Sigmoid colon (tissue), 7 donors: ENCODE measurements at regions of chr21 and their contacts with region 1.

Region 1: DNA sequence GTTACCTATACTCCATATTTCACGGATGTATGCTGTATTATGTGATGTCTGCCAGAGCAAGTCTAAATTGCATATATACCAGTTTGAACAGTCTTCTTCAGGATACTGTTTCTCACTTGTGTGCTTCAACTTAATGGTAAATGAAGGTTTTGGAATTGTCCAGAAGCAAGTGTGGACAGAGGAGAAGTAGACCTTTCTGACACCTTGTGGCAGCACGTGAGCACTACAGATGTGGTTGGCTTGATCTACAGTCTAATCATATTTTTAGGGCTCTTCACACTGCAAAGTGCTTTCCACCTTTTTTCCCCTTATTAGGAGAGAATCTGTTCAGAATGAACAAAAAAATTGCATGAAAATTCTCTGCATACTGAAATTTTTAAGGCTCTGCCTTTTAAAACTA is 10.9 kb downstream of the MORC3 start:
- DNase-seq: no peak
- H3K4me3 ChIP-seq: no peak overlapping the region
- H3K27ac ChIP-seq: no peak overlapping the region
- H3K4me1 ChIP-seq: peaks cover 0 to 54% (median 45%) of the 10 kb centered on the region in 4 donors
- H3K27me3 ChIP-seq: no peaks in the 10 kb centered on the region
- CTCF ChIP-seq: peak; percentile 26 to 64 (median 62)
- EP300 ChIP-seq: no peak
- POLR2A ChIP-seq: no peak

Region 2: GRCh38 chr21:35674895-35675470 is 655.9 kb before region 1 on chr21:
- intact Hi-C with region 1: no loop called
- DNase-seq: no peak
- H3K4me3 ChIP-seq: no peak overlapping the region
- H3K27ac ChIP-seq: no peak overlapping the region
- H3K4me1 ChIP-seq: no peaks in the 10 kb centered on the region
- H3K27me3 ChIP-seq: peaks cover 0 to 5% (median 2%) of the 10 kb centered on the region in 3 donors
- CTCF ChIP-seq: no peak
- EP300 ChIP-seq: no peak
- POLR2A ChIP-seq: no peak

Region 3: DNA sequence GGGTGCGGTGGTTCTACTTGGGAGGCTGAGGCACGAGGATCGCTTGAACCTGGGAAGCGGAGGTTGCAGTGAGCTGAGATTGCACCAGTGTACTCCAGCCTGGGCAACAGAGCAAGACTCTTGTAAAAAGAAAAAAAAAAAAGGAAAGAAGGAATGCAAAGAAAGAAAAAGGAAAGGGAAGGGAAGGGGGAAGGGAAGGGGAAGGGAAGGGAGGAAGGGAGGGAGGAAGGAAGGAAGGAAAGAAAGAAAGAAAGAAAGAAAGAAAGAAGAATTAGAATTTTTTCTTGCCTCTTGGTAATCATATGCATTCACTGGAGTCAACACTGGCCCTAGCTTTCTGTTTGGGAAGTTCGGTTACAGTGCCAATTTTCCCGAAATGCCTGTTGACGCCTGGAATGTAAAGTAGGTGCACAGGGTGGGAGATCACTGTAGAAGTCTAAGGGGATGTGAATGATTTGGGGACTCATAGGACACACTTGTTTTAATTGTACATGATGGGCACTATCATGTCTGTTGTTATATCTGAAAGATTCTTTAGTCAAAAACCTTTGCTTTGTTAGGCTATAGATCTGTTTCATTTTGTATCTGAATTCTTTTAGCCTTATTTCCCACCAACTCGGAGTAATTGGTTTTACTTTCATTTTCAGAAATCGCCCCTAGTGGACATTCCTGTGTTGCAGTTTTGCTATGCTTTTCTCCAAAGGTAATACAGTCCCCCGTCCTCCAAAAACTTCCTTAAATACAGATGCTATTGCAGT is 70.7 kb before region 1 on chr21:
- intact Hi-C with region 1: loop called (anchors 5 kb)
- DNase-seq: no peak
- H3K4me3 ChIP-seq: peak overlapping the region; percentile 36 to 54 (median 46)
- H3K27ac ChIP-seq: peak overlapping the region; percentile 69 to 83 (median 79)
- H3K4me1 ChIP-seq: peaks cover 0 to 8% (median 5%) of the 10 kb centered on the region in 4 donors
- H3K27me3 ChIP-seq: no peaks in the 10 kb centered on the region
- CTCF ChIP-seq: peak; percentile 51 to 77 (median 72)
- EP300 ChIP-seq: no peak
- POLR2A ChIP-seq: no peak

Region 4: DNA sequence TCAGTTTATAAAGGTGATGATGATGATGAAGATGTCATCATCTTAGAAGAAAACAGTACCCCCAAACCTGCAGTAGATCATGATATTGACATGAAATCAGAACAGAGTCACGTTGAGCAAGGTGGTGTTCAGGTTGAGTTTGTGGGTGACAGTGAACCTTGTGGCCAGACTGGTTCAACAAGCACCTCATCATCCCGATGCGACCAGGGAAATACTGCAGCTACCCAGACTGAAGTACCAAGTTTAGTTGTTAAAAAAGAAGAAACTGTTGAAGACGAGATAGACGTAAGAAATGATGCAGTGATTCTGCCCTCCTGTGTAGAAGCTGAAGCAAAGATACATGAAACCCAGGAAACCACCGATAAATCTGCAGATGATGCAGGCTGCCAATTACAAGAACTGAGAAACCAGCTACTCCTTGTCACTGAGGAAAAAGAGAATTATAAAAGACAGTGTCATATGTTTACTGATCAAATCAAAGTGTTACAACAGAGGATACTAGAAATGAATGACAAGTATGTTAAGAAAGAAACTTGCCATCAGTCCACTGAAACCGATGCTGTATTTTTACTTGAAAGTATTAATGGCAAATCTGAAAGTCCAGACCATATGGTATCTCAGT is 38.3 kb after region 1 on chr21:
- intact Hi-C with region 1: no loop called
- DNase-seq: no peak
- H3K4me3 ChIP-seq: no peak overlapping the region
- H3K27ac ChIP-seq: no peak overlapping the region
- H3K4me1 ChIP-seq: no peaks in the 10 kb centered on the region
- H3K27me3 ChIP-seq: no peaks in the 10 kb centered on the region
- CTCF ChIP-seq: no peak
- EP300 ChIP-seq: no peak
- POLR2A ChIP-seq: no peak

Region 5: GRCh38 chr21:36446301-36446700 is 115.4 kb after region 1 on chr21:
- intact Hi-C with region 1: no loop called
- DNase-seq: no peak
- H3K4me3 ChIP-seq: no peak overlapping the region
- H3K27ac ChIP-seq: no peak overlapping the region
- H3K4me1 ChIP-seq: no peaks in the 10 kb centered on the region
- H3K27me3 ChIP-seq: no peaks in the 10 kb centered on the region
- CTCF ChIP-seq: no peak
- EP300 ChIP-seq: no peak
- POLR2A ChIP-seq: no peak